ENCODE measurements at regions of chr2 and their contacts with region 1.

Region 1: GRCh38 chr2:27954771-27955383 is 64.3 kb downstream of the BABAM2 start:
- DNase-seq: peak; percentile 21
- H3K4me3 Mint-ChIP-seq: peak overlapping the region; percentile 49
- H3K27ac Mint-ChIP-seq: peak overlapping the region; percentile 65
- H3K4me1 Mint-ChIP-seq: peaks cover 80% of the 10 kb centered on the region
- H3K27me3 Mint-ChIP-seq: no peaks in the 10 kb centered on the region

Region 2: DNA sequence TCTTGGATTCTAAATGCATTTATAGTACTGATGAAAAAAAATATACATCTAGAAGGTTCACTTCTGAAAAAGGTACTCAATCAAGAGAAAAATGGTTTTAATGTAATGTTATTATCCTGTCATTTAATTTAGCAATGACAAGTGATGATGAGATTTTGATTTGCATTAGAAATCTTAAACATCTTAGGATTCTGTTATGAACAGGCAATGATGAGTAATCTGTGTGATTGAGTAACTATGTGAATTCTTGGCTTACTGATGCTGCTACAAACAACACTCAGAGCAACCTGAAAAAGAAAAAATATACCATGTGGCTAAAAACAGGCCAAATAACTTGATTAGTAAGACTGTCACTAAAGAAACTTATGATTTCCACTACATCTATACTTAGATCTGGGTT is 94.8 kb before region 1 on chr2:
- intact Hi-C with region 1: loop called (anchors 2 kb)
- DNase-seq: no peak
- H3K4me3 Mint-ChIP-seq: no peak overlapping the region
- H3K27ac Mint-ChIP-seq: peak overlapping the region; percentile 31
- H3K4me1 Mint-ChIP-seq: peaks cover 26% of the 10 kb centered on the region
- H3K27me3 Mint-ChIP-seq: peaks cover 2% of the 10 kb centered on the region

Region 3: GRCh38 chr2:27903649-27904404 is 51.0 kb before region 1 on chr2:
- intact Hi-C with region 1: loop called (anchors 1 kb)
- DNase-seq: no peak
- H3K4me3 Mint-ChIP-seq: no peak overlapping the region
- H3K27ac Mint-ChIP-seq: peak overlapping the region; percentile 21
- H3K4me1 Mint-ChIP-seq: peaks cover 54% of the 10 kb centered on the region
- H3K27me3 Mint-ChIP-seq: no peaks in the 10 kb centered on the region

Region 4: DNA sequence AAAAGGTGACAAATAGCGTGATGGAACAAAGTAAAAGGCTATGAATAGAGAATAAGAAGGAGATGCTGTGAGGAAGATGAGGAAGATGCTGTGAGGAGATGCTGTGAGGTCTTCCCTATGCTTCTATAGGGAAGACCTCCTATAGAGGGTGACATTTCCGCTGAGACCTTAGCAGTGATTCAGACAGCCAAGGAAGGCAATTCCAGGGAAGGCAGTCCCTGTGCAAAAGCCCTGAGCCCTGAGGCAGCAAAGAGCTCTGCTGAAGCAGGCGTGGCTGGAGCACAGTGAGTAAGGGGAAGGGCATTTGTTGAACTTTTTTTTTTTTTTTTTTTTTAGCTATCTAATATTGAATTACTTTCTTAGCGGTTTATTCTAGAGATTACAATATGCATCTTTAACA is 295.1 kb after region 1 on chr2:
- intact Hi-C with region 1: loop called (anchors 5 kb)
- DNase-seq: no peak
- H3K4me3 Mint-ChIP-seq: no peak overlapping the region
- H3K27ac Mint-ChIP-seq: no peak overlapping the region
- H3K4me1 Mint-ChIP-seq: peaks cover 64% of the 10 kb centered on the region
- H3K27me3 Mint-ChIP-seq: no peaks in the 10 kb centered on the region

Region 5: DNA sequence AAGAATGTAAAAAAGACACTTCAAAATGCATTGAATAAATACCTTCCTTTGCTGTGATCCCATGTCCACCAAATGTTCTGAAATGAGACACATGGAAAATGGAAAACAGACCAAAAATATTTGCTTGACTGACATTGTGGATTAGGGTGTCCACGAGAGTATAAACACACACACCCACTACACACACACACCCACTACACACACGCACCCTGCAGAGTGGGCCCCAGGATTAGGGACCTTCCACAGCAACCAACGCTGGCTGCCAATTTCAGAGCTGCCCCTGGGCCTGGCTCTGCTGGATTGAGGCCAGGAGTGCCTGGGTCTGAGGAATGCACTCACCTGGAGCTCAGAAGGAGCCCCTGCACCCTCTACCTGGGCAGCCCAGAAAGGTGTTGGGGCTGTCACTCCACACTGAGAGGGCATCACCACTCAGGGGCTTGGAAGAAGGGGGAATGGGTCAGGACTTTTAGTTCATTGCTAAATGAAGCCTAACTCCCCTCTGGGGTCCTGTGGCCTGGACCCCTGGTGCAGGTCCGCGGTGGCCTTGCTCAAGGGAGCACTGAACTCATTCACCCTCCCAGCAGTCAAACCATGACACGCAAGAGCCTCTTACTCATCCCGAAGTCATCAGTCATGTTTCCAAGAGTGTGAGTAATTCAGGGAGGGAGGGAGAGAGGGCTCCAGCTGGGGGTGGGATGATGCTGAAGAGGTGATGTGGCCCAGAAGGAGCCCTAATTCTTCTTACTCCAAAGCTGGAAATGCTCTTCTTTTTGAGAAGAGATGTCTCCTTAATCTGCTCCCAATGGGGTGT is 490.8 kb after region 1 on chr2:
- intact Hi-C with region 1: loop called (anchors 5 kb)
- DNase-seq: no peak
- H3K4me3 Mint-ChIP-seq: peak overlapping the region; percentile 40
- H3K27ac Mint-ChIP-seq: peak overlapping the region; percentile 82
- H3K4me1 Mint-ChIP-seq: peaks cover 78% of the 10 kb centered on the region
- H3K27me3 Mint-ChIP-seq: no peaks in the 10 kb centered on the region

Measured in activated T-helper 1 cell treated with anti-CD3 and anti-CD28 coated beads, Interleukin-12 subunit alpha, Interleukin-12 subunit beta, Interleukin-2, Interleukin-4 antibody, amounts not matched to agents 30 ng/mL and 10 ng/mL and 1 ng/mL, durations not matched to agents 14 hours and 24 hours and 36 hours (primary cell).